ENCODE measurements at regions of chr18 and their contacts with region 1.

Region 1: DNA sequence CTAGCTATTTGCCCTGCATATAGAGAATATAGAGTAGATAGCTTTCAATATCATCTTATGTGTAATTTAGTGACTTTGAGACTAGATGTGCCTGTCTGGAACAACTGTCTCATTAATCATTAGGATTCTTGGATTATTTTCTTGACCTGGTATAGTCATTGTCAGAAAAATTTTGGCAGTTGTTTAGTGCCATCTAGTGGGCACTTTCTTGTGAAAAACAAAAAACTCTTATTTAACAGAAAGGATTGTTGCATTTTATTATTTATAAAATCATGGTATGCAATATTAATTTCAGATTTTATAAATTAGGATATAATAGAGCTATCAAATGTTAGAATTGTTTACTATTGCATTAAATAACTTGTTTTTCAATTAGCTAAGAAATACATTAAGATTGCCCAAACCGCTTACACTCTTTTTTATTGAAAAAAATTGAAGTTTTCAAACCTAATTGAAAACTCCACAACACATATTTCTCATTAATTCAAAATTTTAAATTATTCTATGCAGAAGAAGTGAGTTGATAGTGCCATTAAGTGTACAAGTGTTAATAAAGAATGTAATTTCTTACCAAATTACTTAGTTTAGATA is 80.3 kb downstream of the DYNAP start:
- DNase-seq: no peak
- H3K4me3 Mint-ChIP-seq: no peak overlapping the region
- H3K27ac Mint-ChIP-seq: no peak overlapping the region
- H3K4me1 Mint-ChIP-seq: no peaks in the 10 kb centered on the region
- H3K27me3 Mint-ChIP-seq: peaks cover 4% of the 10 kb centered on the region

Region 2: DNA sequence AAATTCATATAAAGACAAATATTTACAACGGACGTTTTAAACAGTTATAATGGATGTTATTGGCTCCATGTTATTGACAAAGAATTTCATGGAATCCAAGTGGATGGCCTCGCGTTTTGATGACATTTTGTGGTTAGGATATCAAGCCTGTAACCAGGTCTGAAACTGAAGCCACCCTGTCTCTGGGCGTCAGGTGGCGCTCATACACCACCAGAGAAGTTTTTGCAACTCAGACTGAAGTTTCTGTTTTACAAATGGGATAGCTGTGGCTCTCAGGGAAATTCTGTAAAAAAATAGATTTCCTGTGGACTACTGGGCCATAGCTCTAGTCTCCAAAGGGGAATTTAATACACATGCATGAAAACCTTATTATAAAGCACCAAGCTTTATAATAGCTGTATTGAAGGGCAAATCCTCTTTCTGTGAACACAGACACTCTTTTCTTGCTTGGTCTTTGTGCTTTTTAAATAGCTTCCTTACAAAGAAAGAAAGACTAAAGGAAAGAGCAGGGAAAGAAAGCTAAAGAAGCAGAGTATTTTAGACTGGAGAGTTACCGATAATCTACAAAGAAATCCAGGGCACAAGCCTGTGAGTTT is 227.0 kb before region 1 on chr18:
- CTCF ChIA-PET with region 1: interaction called, 30 read pairs
- POLR2A ChIA-PET with region 1: no interaction called
- intact Hi-C with region 1: loop called (anchors 1 kb)
- DNase-seq: peak; percentile 65
- H3K4me3 Mint-ChIP-seq: no peak overlapping the region
- H3K27ac Mint-ChIP-seq: no peak overlapping the region
- H3K4me1 Mint-ChIP-seq: no peaks in the 10 kb centered on the region
- H3K27me3 Mint-ChIP-seq: peaks cover 17% of the 10 kb centered on the region

Region 3: DNA sequence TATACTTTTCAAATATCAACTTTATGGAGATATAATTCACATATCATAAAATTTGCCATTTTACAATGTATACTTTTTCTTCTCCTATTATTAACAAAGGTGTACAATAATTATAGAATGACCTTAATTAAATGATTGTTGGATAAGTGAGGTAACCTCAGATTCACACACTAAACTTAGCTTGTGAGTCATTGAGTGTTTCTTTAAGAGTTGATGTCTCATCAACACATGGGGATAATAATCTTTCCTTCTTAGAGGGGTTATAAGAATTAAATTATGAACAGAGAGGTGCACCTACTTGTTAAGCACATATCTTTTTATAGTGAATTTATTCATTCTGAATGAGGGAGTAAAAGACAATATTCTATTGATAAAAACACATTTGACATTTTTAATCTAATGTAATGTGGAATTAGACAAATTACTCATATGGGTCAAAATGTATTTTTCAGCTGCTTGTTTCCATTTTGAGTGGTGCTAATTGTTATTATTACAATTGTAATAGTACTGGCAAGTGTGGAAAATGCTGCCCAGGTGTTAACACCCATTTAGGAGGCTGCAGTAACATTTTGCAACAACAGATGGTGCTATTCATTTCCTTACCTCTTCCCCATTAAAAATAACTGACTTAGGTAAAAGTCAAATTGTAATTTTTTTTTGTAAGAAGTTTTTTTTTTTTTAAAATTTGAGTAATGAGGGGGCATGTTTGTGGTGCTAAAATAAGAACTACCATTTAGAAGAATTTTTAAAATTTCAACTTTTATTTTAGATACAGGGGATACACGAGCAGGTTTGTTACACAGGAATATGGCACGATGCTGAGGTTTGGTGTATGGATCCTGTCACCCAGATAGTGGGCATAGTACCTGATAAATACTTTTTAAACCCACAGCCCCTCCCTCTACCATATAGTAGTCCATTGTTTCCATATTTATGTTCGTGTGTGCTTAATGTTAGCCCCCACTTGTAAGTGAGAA is 112.5 kb before region 1 on chr18:
- CTCF ChIA-PET with region 1: interaction called, 27 read pairs
- POLR2A ChIA-PET with region 1: no interaction called
- intact Hi-C with region 1: loop called (anchors 1 kb)
- DNase-seq: no peak
- H3K4me3 Mint-ChIP-seq: no peak overlapping the region
- H3K27ac Mint-ChIP-seq: no peak overlapping the region
- H3K4me1 Mint-ChIP-seq: no peaks in the 10 kb centered on the region
- H3K27me3 Mint-ChIP-seq: no peaks in the 10 kb centered on the region

Measured in activated CD4-positive, alpha-beta memory T cell treated with anti-CD3 and anti-CD28 coated beads for 36 hours (primary cell).